HepG2 (cell line): ENCODE measurements at regions of chr6 and their contacts with region 1.

Region 1: DNA sequence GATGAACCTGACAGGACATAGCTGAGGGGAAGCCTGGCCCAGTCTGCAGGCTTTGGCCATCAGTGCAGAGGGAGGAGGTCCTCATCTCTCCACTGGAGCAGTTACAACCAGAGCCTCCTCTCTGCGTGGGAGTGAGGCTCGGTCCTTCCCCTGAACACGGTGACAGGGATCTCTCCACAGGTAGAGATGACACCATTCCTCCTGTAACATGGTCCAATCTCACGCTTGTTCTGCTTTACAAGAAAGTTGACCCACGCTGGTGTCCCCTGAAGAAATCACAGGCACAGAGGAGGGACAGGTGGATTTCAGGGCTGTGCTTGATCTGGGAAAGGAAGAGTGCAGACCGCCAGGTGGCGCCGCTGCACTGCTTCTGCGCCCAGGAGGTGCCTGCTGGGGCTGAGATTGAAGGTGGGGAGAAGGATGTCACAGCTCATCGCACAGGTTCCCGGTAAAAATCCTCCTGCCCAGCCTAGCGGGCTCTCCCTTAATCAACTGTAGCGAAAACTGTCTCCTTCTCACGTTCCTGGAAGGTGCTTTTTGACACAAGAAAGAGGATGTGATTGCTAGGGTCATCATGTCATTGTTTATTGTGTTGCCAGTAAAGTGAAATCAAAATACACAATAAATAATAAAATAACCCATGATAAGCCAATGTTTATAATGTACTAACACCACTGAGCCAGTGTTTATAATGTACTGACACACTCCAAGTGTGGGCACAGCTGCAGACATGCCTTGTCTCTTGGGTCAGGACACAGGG is 20.4 kb downstream of the HLA-G start:
- DNase-seq: peak; percentile 54
- ATAC-seq: peak; percentile 97
- H3K4me3 ChIP-seq: no peak overlapping the region
- H3K27ac ChIP-seq: no peak overlapping the region
- H3K4me1 ChIP-seq: no peaks in the 10 kb centered on the region
- H3K27me3 ChIP-seq: peaks cover 0 to 1% of the 10 kb centered on the region in 2 experiments; a peak in 3 of 5 replicates
- CTCF ChIP-seq: peak; percentile 99
- EP300 ChIP-seq: no peak
- POLR2A ChIP-seq: no peak
- RAD21 ChIP-seq: peak; percentile 99

Region 2: DNA sequence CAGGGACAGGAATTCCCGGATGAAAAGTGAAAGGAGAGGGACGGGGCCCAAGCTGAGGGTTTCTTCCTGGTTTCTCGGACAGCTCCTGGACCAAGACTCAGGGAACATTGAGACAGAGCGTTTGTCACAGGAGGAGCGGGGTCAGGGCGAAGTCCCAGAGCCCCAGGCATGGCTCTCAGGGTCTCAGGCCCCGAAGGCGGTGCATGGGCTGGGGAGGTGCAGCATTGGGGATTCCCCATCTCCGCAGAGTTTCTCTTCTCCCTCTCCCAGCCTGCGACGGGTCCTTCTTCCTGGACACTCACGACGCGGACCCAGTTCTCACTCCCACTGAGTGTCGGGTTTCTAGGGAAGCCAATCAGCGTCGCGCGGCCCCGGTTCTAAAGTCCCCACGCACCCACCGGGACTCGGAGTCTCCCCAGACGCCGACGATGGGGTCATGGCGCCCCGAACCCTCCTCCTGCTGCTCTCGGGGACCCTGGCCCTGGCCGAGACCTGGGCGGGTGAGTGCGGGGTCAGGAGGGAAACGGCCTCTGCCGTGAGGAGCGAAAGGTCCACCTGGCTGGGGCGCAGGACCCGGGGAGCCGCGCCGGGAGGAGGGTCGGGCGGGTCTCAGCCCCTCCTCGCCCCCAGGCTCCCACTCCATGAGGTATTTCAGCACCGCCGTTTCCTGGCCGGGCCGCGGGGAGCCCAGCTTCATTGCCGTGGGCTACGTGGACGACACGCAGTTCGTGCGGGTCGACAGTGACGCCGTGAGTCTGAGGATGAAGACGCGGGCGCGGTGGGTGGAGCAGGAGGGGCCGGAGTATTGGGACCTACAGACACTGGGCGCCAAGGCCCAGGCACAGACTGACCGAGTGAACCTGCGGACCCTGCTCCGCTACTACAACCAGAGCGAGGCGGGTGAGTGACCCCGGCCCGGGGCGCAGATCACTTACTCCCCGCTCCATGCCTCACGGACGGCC is 158.4 kb after region 1 on chr6:
- CTCF ChIA-PET with region 1: interaction called, 134 read pairs
- POLR2A ChIA-PET with region 1: no interaction called
- in situ Hi-C with region 1: loop called (anchors 5 kb)
- intact Hi-C with region 1: no loop called
- DNase-seq: no peak
- ATAC-seq: peak; percentile 76
- H3K4me3 ChIP-seq: peak overlapping the region; percentile 57 to 77 (median 59)
- H3K27ac ChIP-seq: no peak overlapping the region
- H3K4me1 ChIP-seq: peaks cover 26% of the 10 kb centered on the region
- H3K27me3 ChIP-seq: no peaks in the 10 kb centered on the region; a peak in 1 of 5 replicates
- CTCF ChIP-seq: no peak
- EP300 ChIP-seq: no peak
- POLR2A ChIP-seq: no peak
- RAD21 ChIP-seq: no peak

Region 3: DNA sequence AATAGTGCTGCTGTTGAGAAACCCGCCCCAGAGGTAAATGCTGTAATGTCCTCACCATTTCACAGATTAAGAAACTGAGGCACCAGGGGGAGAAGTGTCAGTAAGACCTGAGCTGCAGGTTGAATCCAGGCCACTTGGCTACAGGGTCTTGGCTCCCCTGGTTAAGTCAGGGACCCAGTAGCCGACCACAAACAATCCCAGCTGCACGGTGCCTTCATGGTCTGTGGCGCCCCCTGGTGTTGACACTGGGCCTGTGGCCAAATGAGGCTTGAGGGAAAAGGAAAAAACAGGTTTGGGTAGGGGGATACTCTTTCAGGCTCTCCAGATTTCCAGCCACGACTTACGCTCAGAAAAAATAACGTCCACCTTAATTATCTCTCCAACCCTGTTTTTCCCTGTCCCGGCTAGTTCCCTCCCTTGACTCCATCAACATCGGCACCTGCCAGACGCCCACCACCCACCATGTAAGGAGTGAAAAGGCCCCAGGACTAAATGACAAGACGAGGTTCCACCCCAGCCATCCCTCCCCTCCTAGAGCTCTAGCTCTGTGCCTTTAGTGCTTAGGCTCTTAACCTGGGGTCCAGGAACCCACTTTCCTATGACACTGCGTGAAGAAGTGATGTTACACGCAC is 165.4 kb after region 1 on chr6:
- CTCF ChIA-PET with region 1: interaction called, 134 read pairs
- POLR2A ChIA-PET with region 1: no interaction called
- in situ Hi-C with region 1: loop called (anchors 5 kb)
- intact Hi-C with region 1: loop called (anchors 1 kb)
- DNase-seq: peak; percentile 17
- ATAC-seq: peak; percentile 85
- H3K4me3 ChIP-seq: no peak overlapping the region
- H3K27ac ChIP-seq: no peak overlapping the region
- H3K4me1 ChIP-seq: no peaks in the 10 kb centered on the region
- H3K27me3 ChIP-seq: no peaks in the 10 kb centered on the region
- CTCF ChIP-seq: peak; percentile 77
- EP300 ChIP-seq: no peak
- POLR2A ChIP-seq: no peak
- RAD21 ChIP-seq: peak; percentile 54

Region 4: GRCh38 chr6:30037182-30037788 is 189.2 kb after region 1 on chr6:
- CTCF ChIA-PET with region 1: interaction called, 12 read pairs
- POLR2A ChIA-PET with region 1: no interaction called
- in situ Hi-C with region 1: no loop called
- intact Hi-C with region 1: no loop called
- DNase-seq: peak; percentile 38
- ATAC-seq: peak; percentile 87
- H3K4me3 ChIP-seq: no peak overlapping the region
- H3K27ac ChIP-seq: no peak overlapping the region
- H3K4me1 ChIP-seq: peaks cover 6% of the 10 kb centered on the region
- H3K27me3 ChIP-seq: no peaks in the 10 kb centered on the region
- CTCF ChIP-seq: peak; percentile 69
- EP300 ChIP-seq: no peak
- POLR2A ChIP-seq: no peak
- RAD21 ChIP-seq: 0 out of 2 replicates have a peak, but pooled peaks have one; percentile 14

Region 5: GRCh38 chr6:30169658-30170614 is 321.9 kb after region 1 on chr6:
- CTCF ChIA-PET with region 1: no interaction called
- POLR2A ChIA-PET with region 1: no interaction called
- in situ Hi-C with region 1: no loop called
- intact Hi-C with region 1: loop called (anchors 2 kb)
- DNase-seq: peak; percentile 68
- ATAC-seq: peak; percentile 93
- H3K4me3 ChIP-seq: no peak overlapping the region
- H3K27ac ChIP-seq: no peak overlapping the region
- H3K4me1 ChIP-seq: peaks cover 28% of the 10 kb centered on the region
- H3K27me3 ChIP-seq: peaks cover 0 to under 1% of the 10 kb centered on the region in 2 experiments; a peak in 1 of 5 replicates
- CTCF ChIP-seq: peak; percentile 86
- EP300 ChIP-seq: no peak
- POLR2A ChIP-seq: no peak
- RAD21 ChIP-seq: peak; percentile 89